CD8-positive, alpha-beta memory T cell (primary cell): ENCODE measurements at regions of chr7 and their contacts with region 1.

Region 1: DNA sequence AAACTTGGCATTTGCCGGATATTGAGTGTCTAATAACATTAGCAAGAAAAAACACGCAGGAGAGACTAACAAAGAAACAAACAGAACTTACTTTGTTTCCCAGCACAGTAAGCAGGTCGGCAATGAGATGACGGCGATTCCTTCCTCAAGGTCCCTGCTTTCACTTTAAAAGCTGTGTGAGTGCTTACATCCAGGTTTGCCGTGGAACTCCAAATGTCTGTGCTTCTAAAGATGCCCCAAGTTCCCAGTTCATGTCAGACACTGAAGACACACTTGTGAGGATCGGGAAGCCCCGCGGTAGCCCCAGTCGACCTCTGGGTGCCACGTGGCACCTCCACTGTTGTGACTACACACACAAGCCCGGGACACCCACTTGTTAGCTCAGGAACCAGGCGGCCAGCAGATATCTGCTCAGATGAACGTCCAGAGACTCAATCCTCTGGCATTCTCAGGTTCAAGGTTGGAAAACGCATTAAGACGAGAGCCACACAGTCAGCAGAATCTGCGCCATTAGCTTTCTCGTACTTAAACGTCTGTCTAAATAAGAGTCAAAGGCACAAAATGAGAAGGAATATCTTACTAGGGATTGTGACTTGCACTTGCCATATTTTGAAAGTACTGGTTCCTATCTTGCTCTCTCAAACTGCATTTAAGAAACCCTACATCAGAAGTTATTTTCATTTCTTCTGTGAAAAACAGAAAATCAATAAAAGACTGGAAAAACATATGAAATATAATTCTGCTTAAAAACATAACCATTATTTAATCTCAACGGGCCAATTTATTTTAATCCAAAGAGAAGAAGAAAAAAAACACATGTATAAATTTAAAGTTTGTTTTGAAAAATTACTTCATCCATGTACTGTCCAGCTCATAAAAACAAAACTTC is 207.6 kb upstream of the KLF14 start:
- DNase-seq: peak in 3 of 5 donors; percentile 51 to 64 (median 56)
- H3K4me3 ChIP-seq: peak overlapping the region; percentile 52
- H3K4me3 Mint-ChIP-seq: peak overlapping the region; percentile 85 to 98 (median 93)
- H3K27ac ChIP-seq: peak overlapping the region; percentile 77
- H3K27ac Mint-ChIP-seq: peak overlapping the region; percentile 87 to 99 (median 96)
- H3K4me1 ChIP-seq: peaks cover 85% of the 10 kb centered on the region
- H3K4me1 Mint-ChIP-seq: peaks cover 88 to 97% (median 96%) of the 10 kb centered on the region in 3 donors
- H3K27me3 ChIP-seq: no peaks in the 10 kb centered on the region
- H3K27me3 Mint-ChIP-seq: peaks cover 0 to 4% of the 10 kb centered on the region in 2 donors

Region 2: DNA sequence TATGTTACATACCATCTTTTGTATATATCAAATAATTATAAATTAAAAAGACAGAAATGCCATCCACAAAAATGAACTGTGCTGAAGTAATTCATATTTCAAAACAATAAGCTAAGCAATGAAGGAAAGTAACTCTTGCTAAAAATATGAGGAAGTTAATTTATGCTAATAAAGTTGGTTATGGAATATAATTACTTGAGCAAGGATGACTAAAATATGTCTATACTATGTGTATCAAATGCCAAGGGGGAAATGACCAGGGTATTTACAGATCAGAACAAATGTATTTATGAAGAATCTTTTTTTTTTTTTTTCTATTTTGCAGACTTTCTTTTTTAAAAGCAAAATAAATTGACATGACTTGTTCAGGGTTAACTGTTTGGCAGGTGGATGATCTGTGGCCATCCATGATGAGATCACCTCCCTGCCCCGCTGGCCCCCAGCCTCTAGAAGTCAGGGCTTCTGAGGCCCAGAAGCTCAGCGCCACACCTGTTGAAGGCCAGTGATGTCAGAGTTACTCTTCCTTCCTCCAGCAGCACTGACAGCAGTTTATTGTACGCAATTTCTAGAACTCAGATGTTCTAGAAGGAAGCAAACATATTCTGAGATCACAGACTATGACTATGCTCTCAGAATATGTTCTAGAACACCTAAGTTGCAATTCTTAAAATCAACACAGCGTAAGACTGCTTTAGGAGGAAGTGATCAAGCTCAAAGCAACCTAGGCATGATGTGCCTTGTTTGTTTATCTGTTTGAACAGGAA is 11.5 kb before region 1 on chr7:
- CTCF ChIA-PET with region 1: interaction called, 6 read pairs
- POLR2A ChIA-PET with region 1: interaction called, 10 read pairs
- DNase-seq: peak in 2 of 5 donors; percentile 17 to 66
- H3K4me3 ChIP-seq: no peak overlapping the region
- H3K4me3 Mint-ChIP-seq: peak overlapping the region in 6 of 7 donors; percentile 7 to 52 (median 36)
- H3K27ac ChIP-seq: no peak overlapping the region
- H3K27ac Mint-ChIP-seq: peak overlapping the region; percentile 61 to 92 (median 83)
- H3K4me1 ChIP-seq: peaks cover 79% of the 10 kb centered on the region
- H3K4me1 Mint-ChIP-seq: peaks cover 76 to 98% (median 96%) of the 10 kb centered on the region in 3 donors
- H3K27me3 ChIP-seq: no peaks in the 10 kb centered on the region
- H3K27me3 Mint-ChIP-seq: no peaks in the 10 kb centered on the region

Region 3: GRCh38 chr7:130961128-130961601 is 19.6 kb after region 1 on chr7:
- CTCF ChIA-PET with region 1: interaction called, 56 read pairs
- POLR2A ChIA-PET with region 1: interaction called, 14 read pairs
- DNase-seq: peak; percentile 55 to 86 (median 78)
- H3K4me3 ChIP-seq: peak overlapping the region; percentile 57
- H3K4me3 Mint-ChIP-seq: peak overlapping the region; percentile 87 to 92 (median 88)
- H3K27ac ChIP-seq: peak overlapping the region; percentile 69
- H3K27ac Mint-ChIP-seq: peak overlapping the region in 7 of 8 donors; percentile 95 to 100 (median 99)
- H3K4me1 ChIP-seq: peaks cover 54% of the 10 kb centered on the region
- H3K4me1 Mint-ChIP-seq: peaks cover 4 to 66% (median 7%) of the 10 kb centered on the region in 3 donors
- H3K27me3 ChIP-seq: no peaks in the 10 kb centered on the region
- H3K27me3 Mint-ChIP-seq: no peaks in the 10 kb centered on the region